GM12878 (cell line): ENCODE measurements at regions of chr3 and their contacts with region 1.

Region 1: DNA sequence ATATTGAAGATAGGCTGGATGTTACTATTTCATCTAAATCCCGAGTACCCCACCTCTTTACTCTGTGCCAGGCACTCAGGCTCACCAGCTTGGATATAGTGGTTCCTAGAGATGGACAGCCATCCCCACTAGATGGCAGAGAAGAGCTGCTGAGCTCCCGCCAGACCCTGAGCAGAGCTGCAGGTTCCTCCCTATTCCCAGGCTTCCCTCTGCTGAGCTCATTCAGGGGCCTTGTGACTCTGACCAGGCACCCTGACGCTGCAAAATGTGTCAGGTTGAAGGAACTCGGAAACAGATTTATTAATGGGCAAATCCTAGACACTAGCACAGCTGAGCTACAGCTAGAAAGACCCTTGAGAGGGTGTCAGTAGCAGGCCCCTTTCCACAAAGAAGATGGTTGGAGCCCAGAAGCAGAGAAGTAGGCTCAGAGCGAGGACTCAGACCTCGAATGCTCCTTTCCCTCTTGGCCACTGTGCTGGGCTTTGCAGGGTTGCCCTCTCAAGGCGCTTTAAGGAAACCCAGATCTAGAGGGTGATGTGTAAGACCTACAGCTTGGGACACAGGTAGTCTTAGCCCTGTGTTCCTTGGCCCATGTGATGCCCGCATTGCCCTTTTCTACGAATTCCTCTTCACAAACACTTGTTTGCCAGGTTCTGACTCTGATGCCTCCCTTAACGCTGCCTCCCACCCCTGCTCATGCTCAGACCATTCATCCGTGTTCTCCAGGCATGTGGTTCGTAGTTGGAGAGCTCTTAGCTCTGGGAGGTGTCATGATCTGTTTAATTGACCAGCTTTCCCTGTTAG is 38.0 kb upstream of the RHO start:
- DNase-seq: peak; percentile 12
- ATAC-seq: peak; percentile 99
- H3K4me3 ChIP-seq: no peak overlapping the region
- H3K27ac ChIP-seq: no peak overlapping the region
- H3K4me1 ChIP-seq: peaks cover 15% of the 10 kb centered on the region
- H3K27me3 ChIP-seq: no peaks in the 10 kb centered on the region
- CTCF ChIP-seq: peak; percentile 84 to 89 (median 86)
- EP300 ChIP-seq: no peak
- POLR2A ChIP-seq: no peak
- RAD21 ChIP-seq: peak; percentile 83

Region 2: GRCh38 chr3:129383292-129383860 is 107.1 kb before region 1 on chr3:
- CTCF ChIA-PET with region 1: interaction called, 37 read pairs
- POLR2A ChIA-PET with region 1: interaction called, 3 read pairs
- RAD21 ChIA-PET with region 1: interaction called, 25 read pairs
- SMC1A ChIA-PET with region 1: interaction called, 18 read pairs
- in situ Hi-C with region 1: no loop called
- intact Hi-C with region 1: loop called (anchors 10 kb)
- DNase-seq: no peak
- ATAC-seq: peak; percentile 99
- H3K4me3 ChIP-seq: no peak overlapping the region
- H3K27ac ChIP-seq: no peak overlapping the region
- H3K4me1 ChIP-seq: no peaks in the 10 kb centered on the region
- H3K27me3 ChIP-seq: no peaks in the 10 kb centered on the region
- CTCF ChIP-seq: peak; percentile 85 to 89 (median 86)
- EP300 ChIP-seq: no peak
- POLR2A ChIP-seq: no peak
- RAD21 ChIP-seq: peak; percentile 85

Region 3: GRCh38 chr3:129553719-129554118 is 63.3 kb after region 1 on chr3:
- CTCF ChIA-PET with region 1: interaction called, 15 read pairs
- POLR2A ChIA-PET with region 1: no interaction called
- RAD21 ChIA-PET with region 1: interaction called, 8 read pairs
- SMC1A ChIA-PET with region 1: interaction called, 4 read pairs
- in situ Hi-C with region 1: no loop called
- intact Hi-C with region 1: no loop called
- DNase-seq: no peak
- ATAC-seq: peak; percentile 48; the same call in 2 of the 3 replicates
- H3K4me3 ChIP-seq: no peak overlapping the region
- H3K27ac ChIP-seq: no peak overlapping the region
- H3K4me1 ChIP-seq: no peaks in the 10 kb centered on the region
- H3K27me3 ChIP-seq: peaks cover 2 to 7% of the 10 kb centered on the region in 2 experiments; a peak in 3 of 4 replicates
- CTCF ChIP-seq: no peak
- EP300 ChIP-seq: no peak
- POLR2A ChIP-seq: no peak
- RAD21 ChIP-seq: no peak

Region 4: DNA sequence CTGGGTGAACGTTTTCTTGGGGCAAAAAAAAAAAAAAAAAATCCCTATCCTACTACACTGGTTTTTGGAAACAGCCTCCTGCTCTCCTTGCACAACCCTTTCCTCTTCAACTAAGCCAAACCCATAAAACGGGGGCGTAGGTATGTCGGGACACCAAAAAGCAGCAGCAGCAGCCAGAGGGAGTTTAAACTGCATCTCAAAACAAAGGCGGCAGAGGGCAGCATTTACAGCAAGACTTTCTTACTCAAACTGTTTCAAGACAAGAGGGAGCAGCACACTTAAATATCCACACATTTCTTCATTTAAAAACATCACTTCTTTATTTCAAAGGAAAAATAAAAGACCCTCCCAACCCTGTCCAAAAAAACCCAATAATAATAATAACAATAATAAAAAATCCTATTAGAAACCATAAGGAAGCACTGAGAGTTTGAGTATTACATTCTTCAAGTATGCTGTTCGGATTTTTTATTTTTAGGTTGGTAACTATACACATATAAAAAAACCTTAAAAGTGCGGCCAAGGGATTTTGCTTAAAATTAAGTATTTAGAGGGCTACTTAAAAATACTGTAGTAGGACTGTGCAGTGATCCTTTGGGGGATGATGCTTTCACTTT is 159.9 kb after region 1 on chr3:
- CTCF ChIA-PET with region 1: interaction called, 31 read pairs
- POLR2A ChIA-PET with region 1: no interaction called
- RAD21 ChIA-PET with region 1: interaction called, 10 read pairs
- SMC1A ChIA-PET with region 1: interaction called, 10 read pairs
- in situ Hi-C with region 1: no loop called
- intact Hi-C with region 1: loop called (anchors 1 kb)
- DNase-seq: no peak
- ATAC-seq: peak; percentile 85
- H3K4me3 ChIP-seq: no peak overlapping the region
- H3K27ac ChIP-seq: no peak overlapping the region
- H3K4me1 ChIP-seq: no peaks in the 10 kb centered on the region
- H3K27me3 ChIP-seq: no peaks in the 10 kb centered on the region
- CTCF ChIP-seq: peak; percentile 63 to 82 (median 69); a peak in 5 of 6 replicates
- EP300 ChIP-seq: no peak
- POLR2A ChIP-seq: no peak
- RAD21 ChIP-seq: peak; percentile 89

Region 5: GRCh38 chr3:129732200-129732876 is 241.9 kb after region 1 on chr3:
- CTCF ChIA-PET with region 1: no interaction called
- POLR2A ChIA-PET with region 1: no interaction called
- RAD21 ChIA-PET with region 1: no interaction called
- SMC1A ChIA-PET with region 1: no interaction called
- in situ Hi-C with region 1: no loop called
- intact Hi-C with region 1: no loop called
- DNase-seq: no peak
- ATAC-seq: no peak
- H3K4me3 ChIP-seq: no peak overlapping the region
- H3K27ac ChIP-seq: no peak overlapping the region
- H3K4me1 ChIP-seq: no peaks in the 10 kb centered on the region
- H3K27me3 ChIP-seq: no peaks in the 10 kb centered on the region
- CTCF ChIP-seq: no peak
- EP300 ChIP-seq: no peak
- POLR2A ChIP-seq: no peak
- RAD21 ChIP-seq: no peak

Region 6: GRCh38 chr3:129934234-129935123 is 444.0 kb after region 1 on chr3:
- CTCF ChIA-PET with region 1: interaction called, 21 read pairs
- POLR2A ChIA-PET with region 1: no interaction called
- RAD21 ChIA-PET with region 1: interaction called, 5 read pairs
- SMC1A ChIA-PET with region 1: interaction called, 8 read pairs
- in situ Hi-C with region 1: no loop called
- intact Hi-C with region 1: loop called (anchors 1 kb)
- DNase-seq: no peak
- ATAC-seq: peak; percentile 63
- H3K4me3 ChIP-seq: no peak overlapping the region
- H3K27ac ChIP-seq: no peak overlapping the region
- H3K4me1 ChIP-seq: no peaks in the 10 kb centered on the region
- H3K27me3 ChIP-seq: no peaks in the 10 kb centered on the region
- CTCF ChIP-seq: peak; percentile 82 to 86 (median 85)
- EP300 ChIP-seq: no peak
- POLR2A ChIP-seq: no peak
- RAD21 ChIP-seq: peak; percentile 92